ENCODE measurements at regions of chr2 and their contacts with region 1.

Region 1: GRCh38 chr2:162333968-162334367 is 10.0 kb upstream of the GCA start:
- DNase-seq: no peak
- H3K4me3 ChIP-seq: no peak overlapping the region
- H3K27ac ChIP-seq: no peak overlapping the region
- H3K4me1 ChIP-seq: no peaks in the 10 kb centered on the region
- H3K27me3 ChIP-seq: no peaks in the 10 kb centered on the region
- CTCF ChIP-seq: peak; percentile 13 to 62 (median 39); a peak in 3 of 4 replicates
- EP300 ChIP-seq: no peak
- POLR2A ChIP-seq: no peak
- RAD21 ChIP-seq: peak; percentile 49 to 60

Region 2: GRCh38 chr2:162282765-162283425 is 51.1 kb before region 1 on chr2:
- CTCF ChIA-PET with region 1: no interaction called
- POLR2A ChIA-PET with region 1: no interaction called
- DNase-seq: no peak
- H3K4me3 ChIP-seq: no peak overlapping the region
- H3K27ac ChIP-seq: no peak overlapping the region
- H3K4me1 ChIP-seq: no peaks in the 10 kb centered on the region
- H3K27me3 ChIP-seq: no peaks in the 10 kb centered on the region
- CTCF ChIP-seq: no peak
- EP300 ChIP-seq: no peak
- POLR2A ChIP-seq: no peak
- RAD21 ChIP-seq: no peak

Region 3: GRCh38 chr2:162318328-162319180 is 15.4 kb before region 1 on chr2 and contains the start of gene IFIH1:
- CTCF ChIA-PET with region 1: interaction called, 22 read pairs
- POLR2A ChIA-PET with region 1: interaction called, 3 read pairs
- DNase-seq: peak in 1 of 2 experiments; percentile 71
- H3K4me3 ChIP-seq: peak within 1 kb of the TSS; percentile 50 to 74 (median 64)
- H3K27ac ChIP-seq: peak within 1 kb of the TSS; percentile 19
- H3K4me1 ChIP-seq: peaks cover 0 to 8% (median 2%) of the 10 kb centered on the region in 4 experiments; a peak in 3 of 7 replicates
- H3K27me3 ChIP-seq: peaks cover 0 to 12% (median 6%) of the 10 kb centered on the region in 4 experiments; a peak in 5 of 7 replicates
- CTCF ChIP-seq: peak in 2 of 3 experiments; percentile 9 to 28; a peak in 2 of 4 replicates
- EP300 ChIP-seq: no peak
- POLR2A ChIP-seq: peak in 1 of 2 experiments; percentile 48; a peak in 1 of 3 replicates
- RAD21 ChIP-seq: no peak
- total RNA-seq, gene IFIH1: 1.2 and 2.0 TPM in 2 replicates

Region 4: DNA sequence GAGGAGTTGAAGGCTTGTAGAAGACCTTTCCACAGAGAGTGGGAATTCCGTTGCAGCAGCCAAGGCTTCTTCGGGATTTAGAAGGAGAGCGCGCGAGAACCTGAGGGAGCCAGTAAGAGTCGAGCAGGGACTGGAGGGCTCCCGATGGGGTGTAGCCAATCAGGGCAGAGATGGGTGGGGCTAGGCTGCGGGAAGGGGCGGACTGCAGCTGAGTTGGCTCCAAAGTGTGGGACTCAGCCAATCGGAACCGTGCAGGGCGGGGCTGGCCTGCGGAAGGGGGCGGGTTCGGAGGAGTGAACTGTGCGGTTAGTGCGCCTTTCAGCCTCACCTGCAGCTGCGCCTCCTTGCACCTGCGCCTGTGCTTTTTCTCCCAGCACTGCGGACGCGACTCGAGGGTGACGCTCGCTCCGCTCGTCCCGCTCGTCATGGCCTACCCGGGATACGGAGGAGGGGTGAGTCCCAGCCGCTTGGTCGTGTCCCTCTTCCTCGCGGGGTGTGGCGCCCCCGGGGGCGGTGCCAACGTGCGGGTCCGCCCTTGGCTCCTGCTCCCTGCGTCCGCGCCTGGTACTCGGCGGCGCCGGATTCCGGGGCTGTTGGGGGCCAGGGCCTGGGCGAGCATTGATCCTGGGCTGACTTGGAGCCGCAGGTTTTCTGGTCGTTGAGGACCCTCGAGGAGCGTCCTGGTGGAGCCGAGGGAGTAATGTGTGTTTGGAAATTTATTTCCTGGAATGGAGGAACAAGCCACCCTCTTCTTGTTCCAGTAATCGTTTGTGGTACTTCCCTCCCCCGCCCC is 10.1 kb after region 1 on chr2 and contains the start of gene GCA:
- CTCF ChIA-PET with region 1: interaction called, 14 read pairs
- POLR2A ChIA-PET with region 1: no interaction called
- DNase-seq: peak; percentile 95 to 96
- H3K4me3 ChIP-seq: peak within 1 kb of the TSS; percentile 48 to 93 (median 86)
- H3K27ac ChIP-seq: peak within 1 kb of the TSS; percentile 48; the same call in 1 of the 2 replicates
- H3K4me1 ChIP-seq: peaks cover 0 to 2% (median 0%) of the 10 kb centered on the region in 4 experiments; a peak in 3 of 7 replicates
- H3K27me3 ChIP-seq: no peaks in the 10 kb centered on the region
- CTCF ChIP-seq: no peak
- EP300 ChIP-seq: no peak
- POLR2A ChIP-seq: peak; percentile 63 to 88
- RAD21 ChIP-seq: no peak
- total RNA-seq, gene GCA: 37.2 and 42.0 TPM in 2 replicates